Activated B cell treated with CpG ODN at 0.5 μM for 24 hours (primary cell): ENCODE measurements at regions of chr2 and their contacts with region 1.

Region 1: DNA sequence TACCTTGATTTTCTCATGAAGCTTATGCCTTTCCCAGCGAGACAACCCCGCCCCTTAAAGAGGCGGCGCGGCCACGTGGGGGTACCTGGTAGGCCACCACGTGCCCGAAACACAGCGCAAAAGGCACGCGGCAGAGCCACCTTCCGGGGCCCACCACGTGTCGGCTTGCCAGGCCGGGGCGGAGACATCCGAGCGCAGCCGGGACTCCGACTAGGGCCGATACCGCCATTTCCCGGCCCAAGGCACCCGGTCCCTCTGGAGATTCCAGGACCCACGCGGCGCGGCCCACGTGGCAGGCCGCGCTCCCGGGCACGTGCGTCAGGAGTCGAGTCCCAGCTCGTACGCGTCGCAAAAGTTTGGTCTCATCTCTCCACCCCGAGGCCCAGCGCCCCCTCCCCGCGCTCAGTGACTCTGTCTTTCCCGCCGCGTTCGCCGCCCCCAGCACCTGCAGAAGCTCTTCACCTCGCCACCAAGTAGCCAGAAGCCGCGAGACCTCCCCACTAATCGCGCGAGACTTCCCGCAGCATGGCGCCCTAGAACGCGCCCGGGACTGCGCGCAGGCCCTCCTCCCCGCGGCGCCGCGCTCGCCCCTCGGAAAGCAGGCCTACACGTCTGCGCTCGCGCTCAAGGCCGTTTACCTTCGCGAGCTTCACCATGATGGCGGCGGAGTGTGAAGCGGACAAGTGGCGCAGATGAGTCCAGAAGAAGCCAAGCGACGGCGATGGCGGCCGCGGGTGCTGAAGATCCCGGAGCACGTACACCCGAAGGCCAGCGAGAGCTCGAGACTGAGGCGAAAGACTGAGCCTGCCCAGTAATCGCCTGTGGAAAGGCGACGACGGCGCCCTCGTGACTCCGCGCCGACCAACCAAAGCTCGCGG is at the start of gene NCL:
- DNase-seq: peak; percentile 71
- ATAC-seq: peak; percentile 54
- H3K4me3 Mint-ChIP-seq: peak within 1 kb of the TSS; percentile 98
- H3K27ac Mint-ChIP-seq: peak within 1 kb of the TSS; percentile 100
- H3K4me1 Mint-ChIP-seq: peaks cover 39% of the 10 kb centered on the region
- H3K27me3 Mint-ChIP-seq: no peaks in the 10 kb centered on the region
- CTCF ChIP-seq: no peak
- total RNA-seq, gene NCL: 693 and 761 TPM in 2 replicates

Region 2: DNA sequence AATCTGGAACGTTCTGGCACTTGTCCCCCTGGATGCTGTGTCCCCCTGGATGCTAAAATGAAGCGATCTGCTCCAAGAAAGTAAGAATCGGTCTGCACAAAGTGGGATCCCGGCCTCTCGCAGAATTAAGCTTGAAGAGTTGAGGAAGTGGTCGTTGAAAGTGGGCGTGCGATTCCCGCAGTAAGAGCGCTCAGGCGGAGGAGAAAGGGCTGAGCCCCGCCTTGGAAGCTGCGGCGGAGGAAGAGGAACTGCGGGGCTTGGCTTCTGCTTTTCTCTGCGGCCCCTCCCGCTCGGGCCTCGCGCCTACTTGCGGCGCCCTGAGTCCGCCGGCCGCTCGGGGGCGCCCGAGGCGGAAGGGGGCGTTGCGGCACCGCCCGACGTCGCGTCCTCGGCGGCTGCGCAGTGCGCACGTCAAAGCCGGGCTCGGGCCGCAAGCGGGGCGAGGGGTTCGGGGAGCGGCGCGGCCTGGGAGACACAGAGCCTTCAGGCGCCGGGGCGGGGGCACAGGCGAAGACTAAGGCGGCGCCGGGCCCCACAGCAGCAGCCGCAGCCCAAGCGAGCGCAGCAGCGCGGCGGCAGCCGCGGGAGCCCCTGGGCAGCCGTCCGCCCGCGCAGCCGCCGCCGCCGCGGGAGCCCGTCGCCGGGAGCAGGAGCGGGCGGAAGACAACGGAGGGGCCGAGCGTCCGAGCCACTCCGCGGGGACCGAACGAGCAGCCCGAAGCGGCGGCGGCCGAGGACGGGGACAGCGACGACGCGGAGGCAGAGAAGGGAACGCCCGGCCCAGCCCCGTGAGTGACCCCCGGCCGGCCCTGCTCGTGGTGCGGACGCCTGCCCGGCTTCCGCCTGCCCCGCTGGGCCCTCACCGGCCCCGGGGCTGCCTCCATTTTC is 751.2 kb before region 1 on chr2 and contains the start of gene CAB39:
- CTCF ChIA-PET with region 1: no interaction called
- POLR2A ChIA-PET with region 1: no interaction called
- intact Hi-C with region 1: no loop called
- DNase-seq: peak; percentile 95
- ATAC-seq: peak; percentile 91
- H3K4me3 Mint-ChIP-seq: peak within 1 kb of the TSS; percentile 94
- H3K27ac Mint-ChIP-seq: peak within 1 kb of the TSS; percentile 93
- H3K4me1 Mint-ChIP-seq: peaks cover 48% of the 10 kb centered on the region
- H3K27me3 Mint-ChIP-seq: no peaks in the 10 kb centered on the region
- CTCF ChIP-seq: no peak
- total RNA-seq, gene CAB39: 60.1 and 68.6 TPM in 2 replicates

Region 3: GRCh38 chr2:231452799-231453508 is 11.0 kb before region 1 on chr2:
- CTCF ChIA-PET with region 1: interaction called, 5 read pairs
- POLR2A ChIA-PET with region 1: interaction called, 96 read pairs
- intact Hi-C with region 1: loop called (anchors 1 kb)
- DNase-seq: no peak
- ATAC-seq: no peak
- H3K4me3 Mint-ChIP-seq: no peak overlapping the region
- H3K27ac Mint-ChIP-seq: no peak overlapping the region
- H3K4me1 Mint-ChIP-seq: peaks cover 7% of the 10 kb centered on the region
- H3K27me3 Mint-ChIP-seq: no peaks in the 10 kb centered on the region
- CTCF ChIP-seq: no peak

Region 4: DNA sequence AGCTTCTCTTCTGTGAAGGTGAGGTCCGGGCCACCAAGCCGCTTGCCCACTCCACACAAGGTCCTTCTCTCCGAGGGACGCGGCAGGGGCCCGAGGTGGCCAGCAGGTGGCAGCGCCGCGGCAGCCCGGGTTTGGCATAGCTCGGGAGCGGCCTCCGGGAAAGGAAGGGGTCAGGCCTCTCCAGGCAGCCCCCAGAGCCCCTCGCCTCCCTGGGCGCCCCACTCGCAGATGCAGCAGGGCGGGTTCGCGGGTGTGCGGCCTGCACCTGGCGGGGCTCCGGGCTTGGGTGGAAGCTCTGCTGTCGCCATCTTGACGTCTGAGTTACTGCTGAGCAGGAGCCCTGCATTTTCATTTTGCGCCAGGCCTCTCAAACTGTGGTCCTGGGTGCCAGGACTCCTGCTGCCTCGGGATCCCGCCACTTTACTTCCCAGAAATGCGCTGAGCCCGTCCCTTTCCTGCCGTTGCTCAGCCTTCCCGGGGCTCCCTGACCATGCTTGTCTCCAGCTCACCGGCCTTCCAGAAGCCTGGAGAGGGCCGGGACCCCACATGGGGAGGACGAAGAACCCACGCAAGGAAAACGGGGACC is 19.0 kb after region 1 on chr2:
- CTCF ChIA-PET with region 1: interaction called, 36 read pairs
- POLR2A ChIA-PET with region 1: interaction called, 89 read pairs
- intact Hi-C with region 1: loop called (anchors 1 kb)
- DNase-seq: peak; percentile 77
- ATAC-seq: peak; percentile 85
- H3K4me3 Mint-ChIP-seq: peak overlapping the region; percentile 80
- H3K27ac Mint-ChIP-seq: peak overlapping the region; percentile 82
- H3K4me1 Mint-ChIP-seq: peaks cover 9% of the 10 kb centered on the region
- H3K27me3 Mint-ChIP-seq: no peaks in the 10 kb centered on the region
- CTCF ChIP-seq: peak; percentile 29

Region 5: DNA sequence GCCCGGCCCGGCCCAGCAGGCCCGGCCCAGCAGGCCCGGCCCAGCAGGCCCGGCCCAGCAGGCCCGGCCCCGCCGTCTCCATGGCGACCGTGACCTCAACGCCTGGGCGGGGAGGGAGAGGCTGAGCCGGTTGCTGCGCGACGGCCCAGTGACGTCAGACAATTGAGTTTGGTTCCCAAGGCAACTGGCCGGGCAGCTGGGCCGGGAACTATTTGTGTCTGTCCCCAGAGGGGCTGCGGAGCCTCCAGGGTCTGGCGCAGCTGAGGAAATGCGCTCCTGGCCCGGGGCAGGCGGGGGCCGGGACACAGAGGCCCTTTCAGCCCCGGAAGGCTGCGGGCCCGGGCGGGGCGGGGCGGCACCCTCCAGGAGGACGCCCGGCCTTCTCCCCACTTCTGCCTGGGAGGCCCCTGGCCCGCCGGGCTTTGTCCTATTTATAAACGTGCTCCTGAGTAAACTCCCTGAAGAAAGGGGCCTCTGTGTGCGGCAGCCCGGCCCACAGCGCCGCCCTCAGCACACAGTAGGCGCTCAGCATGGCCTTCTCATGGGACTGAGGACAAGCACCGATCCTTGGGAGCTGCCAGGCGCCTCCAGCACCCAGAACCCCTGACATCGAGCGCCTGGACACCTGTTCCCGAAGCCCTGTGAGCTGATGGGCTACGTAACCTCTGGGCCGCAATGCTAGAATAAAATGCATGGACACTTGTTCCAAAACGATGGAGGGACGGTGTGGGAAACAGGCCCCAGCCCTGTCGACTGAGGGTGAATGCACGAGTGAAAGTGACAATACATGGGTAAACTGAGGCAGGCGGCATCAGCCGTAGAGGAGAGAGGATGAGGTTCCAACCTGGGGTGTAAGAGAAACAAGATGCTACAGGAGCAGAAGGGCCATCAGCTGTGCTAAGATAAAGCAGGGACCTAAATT is 141.0 kb after region 1 on chr2:
- CTCF ChIA-PET with region 1: no interaction called
- POLR2A ChIA-PET with region 1: interaction called, 15 read pairs
- intact Hi-C with region 1: loop called (anchors 1 kb)
- DNase-seq: peak; percentile 99
- ATAC-seq: peak; percentile 88
- H3K4me3 Mint-ChIP-seq: peak overlapping the region; percentile 72
- H3K27ac Mint-ChIP-seq: peak overlapping the region; percentile 87
- H3K4me1 Mint-ChIP-seq: peaks cover 31% of the 10 kb centered on the region
- H3K27me3 Mint-ChIP-seq: no peaks in the 10 kb centered on the region
- CTCF ChIP-seq: no peak

Region 6: GRCh38 chr2:231674587-231675338 is 210.8 kb after region 1 on chr2:
- CTCF ChIA-PET with region 1: no interaction called
- POLR2A ChIA-PET with region 1: interaction called, 33 read pairs
- intact Hi-C with region 1: loop called (anchors 2 kb)
- DNase-seq: peak; percentile 81
- ATAC-seq: peak; percentile 40
- H3K4me3 Mint-ChIP-seq: peak overlapping the region; percentile 64
- H3K27ac Mint-ChIP-seq: peak overlapping the region; percentile 98
- H3K4me1 Mint-ChIP-seq: peaks cover 77% of the 10 kb centered on the region
- H3K27me3 Mint-ChIP-seq: no peaks in the 10 kb centered on the region
- CTCF ChIP-seq: peak; percentile 83

Region 7: GRCh38 chr2:231780909-231781797 is 317.2 kb after region 1 on chr2 and contains the start of gene PDE6D:
- CTCF ChIA-PET with region 1: no interaction called
- POLR2A ChIA-PET with region 1: interaction called, 6 read pairs
- intact Hi-C with region 1: loop called (anchors 1 kb)
- DNase-seq: peak; percentile 95
- ATAC-seq: peak; percentile 89
- H3K4me3 Mint-ChIP-seq: peak within 1 kb of the TSS; percentile 99
- H3K27ac Mint-ChIP-seq: peak within 1 kb of the TSS; percentile 96
- H3K4me1 Mint-ChIP-seq: peaks cover 52% of the 10 kb centered on the region
- H3K27me3 Mint-ChIP-seq: no peaks in the 10 kb centered on the region
- CTCF ChIP-seq: no peak
- total RNA-seq, gene PDE6D: 35.7 and 41.3 TPM in 2 replicates

Region 8: GRCh38 chr2:233053928-233054784 is 1590.2 kb after region 1 on chr2:
- CTCF ChIA-PET with region 1: no interaction called
- POLR2A ChIA-PET with region 1: no interaction called
- intact Hi-C with region 1: no loop called
- DNase-seq: peak; percentile 72
- ATAC-seq: peak; percentile 74
- H3K4me3 Mint-ChIP-seq: no peak overlapping the region
- H3K27ac Mint-ChIP-seq: peak overlapping the region; percentile 32
- H3K4me1 Mint-ChIP-seq: peaks cover 16% of the 10 kb centered on the region
- H3K27me3 Mint-ChIP-seq: peaks cover 3% of the 10 kb centered on the region
- CTCF ChIP-seq: peak; percentile 65